AG04450 (cell line): ENCODE measurements at regions of chr5 and their contacts with region 1.

Region 1: GRCh38 chr5:14685757-14686156 is 21.2 kb downstream of the OTULIN start:
- DNase-seq: peak; percentile 33
- H3K4me3 ChIP-seq: no peak overlapping the region
- H3K27ac ChIP-seq: no peak overlapping the region
- H3K27me3 ChIP-seq: no peaks in the 10 kb centered on the region
- CTCF ChIP-seq: peak; percentile 82

Region 2: GRCh38 chr5:15013654-15014463 is 328.1 kb after region 1 on chr5:
- CTCF ChIA-PET with region 1: interaction called, 61 read pairs
- POLR2A ChIA-PET with region 1: no interaction called
- DNase-seq: peak; percentile 42
- H3K4me3 ChIP-seq: no peak overlapping the region
- H3K27ac ChIP-seq: no peak overlapping the region
- H3K27me3 ChIP-seq: no peaks in the 10 kb centered on the region
- CTCF ChIP-seq: peak; percentile 68